Heart left ventricle (tissue), 16 donors: ENCODE measurements at regions of chr1 and their contacts with region 1.

Region 1: GRCh38 chr1:212455803-212456528 is 23.2 kb downstream of the NENF start:
- DNase-seq: peak; percentile 86 to 91 (median 87)
- ATAC-seq: peak; percentile 75 to 82 (median 78)
- H3K4me3 ChIP-seq: peak overlapping the region in 3 of 12 donors; percentile 8 to 36 (median 13)
- H3K27ac ChIP-seq: peak overlapping the region in 10 of 12 donors; percentile 6 to 73 (median 45)
- H3K4me1 ChIP-seq: peaks cover 0 to 42% (median 21%) of the 10 kb centered on the region in 12 donors
- H3K27me3 ChIP-seq: no peaks in the 10 kb centered on the region
- CTCF ChIP-seq: peak; percentile 95 to 100 (median 98)
- POLR2A ChIP-seq: no peak

Region 2: DNA sequence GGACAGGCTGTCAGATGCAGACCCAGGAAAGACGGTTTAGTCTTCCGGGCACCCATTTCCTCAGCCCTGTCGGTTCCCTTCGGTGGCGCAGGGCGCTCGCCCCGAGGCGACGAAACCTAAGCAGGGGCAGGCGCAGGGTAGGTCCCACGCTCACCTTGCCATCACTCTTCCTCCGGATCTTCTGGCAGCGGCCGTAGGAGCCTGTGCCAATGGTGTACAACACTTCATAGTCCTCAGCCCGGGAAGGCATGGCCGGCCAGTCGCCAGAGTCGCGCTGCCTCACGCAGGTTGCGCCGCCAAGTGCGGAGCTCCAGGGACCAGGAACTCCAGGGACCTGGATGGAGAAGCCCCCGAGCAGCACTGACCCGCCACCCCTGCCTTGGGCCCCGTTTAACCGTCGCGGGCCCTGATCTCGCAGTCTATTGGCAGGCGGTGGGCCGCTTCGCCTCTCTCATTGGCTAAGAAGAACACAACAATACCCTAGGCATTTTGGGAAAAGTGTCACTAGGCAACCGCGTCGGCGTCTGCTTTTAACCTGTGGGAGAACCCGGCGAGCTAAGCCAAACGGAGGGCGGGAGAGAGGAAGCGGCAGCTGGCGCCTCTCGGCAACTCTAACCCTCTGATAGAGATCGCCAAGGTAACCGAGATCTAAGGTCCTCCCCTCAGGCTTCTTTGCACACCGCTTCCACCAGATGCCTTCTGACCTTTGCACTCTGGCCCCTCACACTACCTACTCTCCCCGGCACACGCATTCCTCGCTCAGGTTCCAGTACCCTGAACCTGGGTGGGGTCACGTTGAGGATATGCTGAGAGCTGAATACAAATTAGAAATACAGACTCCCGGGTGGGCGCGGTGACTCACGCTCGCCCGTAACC is 780.5 kb before region 1 on chr1 and contains the start of gene NEK2:
- intact Hi-C with region 1: loop called in 7 of 10 experiments (anchors 10 kb)
- DNase-seq: peak; percentile 87 to 93 (median 89)
- ATAC-seq: peak; percentile 94 to 100 (median 99)
- H3K4me3 ChIP-seq: peak within 1 kb of the TSS; percentile 12 to 74 (median 59)
- H3K27ac ChIP-seq: no peak within 1 kb of the TSS
- H3K4me1 ChIP-seq: peaks cover 0 to 20% (median 5%) of the 10 kb centered on the region in 12 donors
- H3K27me3 ChIP-seq: no peaks in the 10 kb centered on the region
- CTCF ChIP-seq: no peak
- POLR2A ChIP-seq: no peak
- total RNA-seq, gene NEK2: 0.16 to 2.5 (median 0.34) TPM in 5 of 9 donors, not detected in the others

Region 3: GRCh38 chr1:212012034-212012740 is 443.8 kb before region 1 on chr1:
- intact Hi-C with region 1: loop called in 2 of 10 experiments (anchors 5 kb)
- DNase-seq: peak in 4 of 5 donors; percentile 39 to 66 (median 59)
- ATAC-seq: peak; percentile 69 to 93 (median 86)
- H3K4me3 ChIP-seq: no peak overlapping the region
- H3K27ac ChIP-seq: no peak overlapping the region
- H3K4me1 ChIP-seq: no peaks in the 10 kb centered on the region
- H3K27me3 ChIP-seq: no peaks in the 10 kb centered on the region
- CTCF ChIP-seq: peak; percentile 84 to 95 (median 90)
- POLR2A ChIP-seq: no peak

Region 4: GRCh38 chr1:212062832-212063438 is 393.0 kb before region 1 on chr1:
- intact Hi-C with region 1: loop called in 8 of 10 experiments (anchors 1 to 5 kb)
- DNase-seq: no peak
- ATAC-seq: peak in 3 of 4 donors; percentile 39 to 51 (median 47)
- H3K4me3 ChIP-seq: no peak overlapping the region
- H3K27ac ChIP-seq: no peak overlapping the region
- H3K4me1 ChIP-seq: peaks cover 0 to 7% (median 0%) of the 10 kb centered on the region in 12 donors
- H3K27me3 ChIP-seq: no peaks in the 10 kb centered on the region
- CTCF ChIP-seq: peak; percentile 56 to 77 (median 69)
- POLR2A ChIP-seq: no peak

Region 5: DNA sequence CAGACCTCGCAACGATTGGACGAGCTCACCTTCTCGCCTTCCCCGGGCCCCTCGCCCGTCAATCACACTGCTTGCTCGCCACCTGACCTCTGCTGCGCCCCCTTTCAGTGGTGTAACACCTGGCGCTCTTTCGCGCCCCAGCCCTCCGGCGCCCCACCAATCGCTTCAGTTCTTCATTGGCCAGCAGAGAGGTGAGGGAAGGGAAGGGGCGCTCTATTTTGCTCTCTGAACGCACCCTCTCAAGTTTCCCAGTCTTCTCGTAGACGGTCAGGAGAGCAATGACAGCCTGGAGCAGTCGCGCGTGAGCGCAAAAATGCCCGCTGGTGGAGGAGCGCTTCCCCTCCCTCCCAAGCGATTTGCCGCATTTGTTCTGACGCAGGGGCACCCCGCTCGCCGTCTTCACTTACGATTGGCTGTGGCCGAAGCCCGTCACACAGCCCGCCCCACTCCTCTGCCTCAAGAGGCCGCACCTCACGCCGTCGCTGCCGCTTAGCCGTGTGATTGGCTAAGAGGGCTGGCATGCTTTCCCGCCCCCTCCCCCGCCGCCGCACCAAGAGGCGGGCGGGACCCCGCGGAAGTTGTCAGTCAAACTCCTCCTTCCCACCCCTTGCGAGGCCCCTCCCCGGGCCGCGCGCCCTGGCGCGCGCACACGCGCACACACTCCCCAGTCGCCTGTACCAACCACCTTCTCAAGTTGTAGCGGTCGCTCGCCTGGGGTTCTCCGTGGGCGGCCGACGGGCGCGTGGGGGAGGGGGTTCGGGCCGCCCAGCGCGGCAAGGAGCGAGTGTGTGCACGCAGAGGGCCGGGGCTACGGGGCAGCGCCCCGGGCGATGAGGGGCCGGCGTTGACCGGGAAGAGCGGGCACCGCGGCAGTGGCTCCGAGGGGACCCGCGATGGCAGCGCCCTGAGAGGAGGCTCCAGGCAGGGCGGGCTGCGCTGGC is 171.0 kb before region 1 on chr1 and contains the start of gene PPP2R5A:
- intact Hi-C with region 1: loop called in 8 of 10 experiments (anchors 5 to 10 kb)
- DNase-seq: peak; percentile 99 to 100 (median 99)
- ATAC-seq: peak; percentile 95 to 99 (median 98)
- H3K4me3 ChIP-seq: peak within 1 kb of the TSS; percentile 79 to 98 (median 92)
- H3K27ac ChIP-seq: peak within 1 kb of the TSS; percentile 95 to 100 (median 99)
- H3K4me1 ChIP-seq: peaks cover 0 to 40% (median 21%) of the 10 kb centered on the region in 12 donors
- H3K27me3 ChIP-seq: no peaks in the 10 kb centered on the region
- CTCF ChIP-seq: peak in 5 of 12 donors; percentile 17 to 48 (median 39)
- POLR2A ChIP-seq: peak; percentile 59 to 97
- total RNA-seq, gene PPP2R5A: 52.0 to 102 (median 63.5) TPM

Region 6: DNA sequence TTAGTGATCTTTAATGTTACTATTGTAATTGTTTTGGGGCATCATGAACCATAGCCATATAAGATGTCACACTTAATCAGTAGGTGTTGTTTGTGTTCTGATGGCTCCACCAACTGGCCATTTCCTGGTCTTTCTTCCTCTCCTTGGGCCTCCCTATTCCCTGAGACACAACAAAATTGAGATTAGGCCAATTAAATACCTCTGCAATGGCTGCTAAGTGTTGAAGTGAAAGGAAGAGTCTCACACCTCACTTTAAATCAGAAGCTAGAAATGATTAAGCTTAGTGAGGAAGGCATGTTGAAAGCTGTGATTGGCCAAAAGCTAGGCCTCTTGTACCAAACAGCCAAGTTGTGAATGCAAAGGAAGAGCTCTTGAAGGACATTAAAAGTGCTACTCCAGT is 140.1 kb before region 1 on chr1:
- intact Hi-C with region 1: loop called in 1 of 10 experiments (anchors 10 kb)
- DNase-seq: no peak
- ATAC-seq: peak in 3 of 4 donors; percentile 39 to 61 (median 43)
- H3K4me3 ChIP-seq: no peak overlapping the region
- H3K27ac ChIP-seq: no peak overlapping the region
- H3K4me1 ChIP-seq: peaks cover 0 to 45% (median 23%) of the 10 kb centered on the region in 12 donors
- H3K27me3 ChIP-seq: no peaks in the 10 kb centered on the region
- CTCF ChIP-seq: peak in 6 of 12 donors; percentile 15 to 45 (median 26)
- POLR2A ChIP-seq: no peak

Region 7: DNA sequence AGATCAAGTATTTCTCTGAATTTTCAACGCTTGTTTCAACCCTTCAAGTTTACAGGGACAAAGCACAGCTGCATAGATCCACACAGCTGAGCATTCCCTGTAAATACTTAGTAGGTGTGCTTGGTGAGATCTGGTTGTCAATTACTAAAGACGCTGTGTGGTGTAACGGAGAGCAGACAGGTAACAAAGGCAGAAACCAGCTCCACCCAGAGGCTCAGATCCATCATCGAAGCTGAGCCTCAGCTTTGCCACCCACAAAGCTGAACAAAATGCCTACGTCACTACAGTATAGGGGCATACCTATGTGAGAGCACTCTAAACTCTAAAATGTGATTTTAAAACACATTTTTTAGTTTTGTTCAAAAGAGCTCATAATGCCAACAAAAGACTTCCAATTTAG is 80.0 kb before region 1 on chr1:
- intact Hi-C with region 1: loop called in 1 of 10 experiments (anchors 5 kb)
- DNase-seq: no peak
- ATAC-seq: no peak
- H3K4me3 ChIP-seq: no peak overlapping the region
- H3K27ac ChIP-seq: no peak overlapping the region
- H3K4me1 ChIP-seq: no peaks in the 10 kb centered on the region
- H3K27me3 ChIP-seq: no peaks in the 10 kb centered on the region
- CTCF ChIP-seq: no peak
- POLR2A ChIP-seq: no peak

Region 8: DNA sequence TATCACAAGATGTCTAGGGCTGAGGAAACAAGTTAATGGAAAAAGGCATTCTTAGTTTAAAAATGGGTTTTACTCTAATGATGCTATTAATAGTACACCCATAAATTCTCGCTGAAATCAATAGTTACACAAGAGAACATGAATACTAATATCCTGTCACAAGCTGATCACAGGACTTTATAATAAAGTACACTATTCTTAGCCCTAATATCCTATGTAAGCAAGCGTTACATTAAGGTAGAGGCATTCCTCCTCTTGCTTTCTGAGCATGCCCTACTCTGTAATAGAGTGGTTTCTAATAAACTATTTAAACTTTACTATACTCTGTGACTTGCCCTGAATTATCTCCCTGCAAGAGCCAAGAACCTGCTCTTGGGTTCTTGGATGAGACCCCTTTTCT is 34.8 kb before region 1 on chr1:
- intact Hi-C with region 1: no loop called
- DNase-seq: no peak
- ATAC-seq: no peak
- H3K4me3 ChIP-seq: no peak overlapping the region
- H3K27ac ChIP-seq: no peak overlapping the region
- H3K4me1 ChIP-seq: no peaks in the 10 kb centered on the region
- H3K27me3 ChIP-seq: no peaks in the 10 kb centered on the region
- CTCF ChIP-seq: no peak
- POLR2A ChIP-seq: no peak